PC-9 (cell line): ENCODE measurements at regions of chr17 and their contacts with region 1.

Region 1: GRCh38 chr17:62109378-62109902 is 44.4 kb upstream of the MED13 start:
- DNase-seq: peak; percentile 77 to 79
- H3K4me3 ChIP-seq: no peak overlapping the region
- H3K27ac ChIP-seq: no peak overlapping the region
- H3K4me1 ChIP-seq: peaks cover 4% of the 10 kb centered on the region; the same call in 1 of the 2 replicates
- H3K27me3 ChIP-seq: no peaks in the 10 kb centered on the region
- CTCF ChIP-seq: peak; percentile 82

Region 2: GRCh38 chr17:61635913-61636432 is 473.5 kb before region 1 on chr17:
- CTCF ChIA-PET with region 1: interaction called, 19 read pairs
- POLR2A ChIA-PET with region 1: no interaction called
- intact Hi-C with region 1: loop called (anchors 1 kb)
- DNase-seq: peak; percentile 36 to 43
- H3K4me3 ChIP-seq: no peak overlapping the region
- H3K27ac ChIP-seq: no peak overlapping the region
- H3K4me1 ChIP-seq: no peaks in the 10 kb centered on the region
- H3K27me3 ChIP-seq: no peaks in the 10 kb centered on the region
- CTCF ChIP-seq: peak; percentile 90

Region 3: DNA sequence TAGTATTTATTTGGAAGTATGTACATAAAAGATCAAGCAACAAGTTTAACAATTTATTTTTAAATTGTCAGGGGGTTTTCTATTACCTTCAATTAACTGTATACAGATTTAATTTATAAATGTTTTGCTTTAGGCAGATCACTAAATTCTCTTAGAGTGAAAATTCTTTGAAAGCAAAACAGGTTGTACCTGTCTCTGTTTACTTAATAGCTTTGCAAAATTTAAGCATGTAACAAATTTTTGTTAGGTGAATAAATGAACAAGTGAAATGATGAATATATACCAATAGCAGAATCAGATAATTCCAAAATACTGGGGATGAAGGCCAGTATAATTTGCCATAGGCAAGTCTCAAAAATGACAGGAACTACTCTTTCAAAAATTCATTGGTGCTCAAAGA is 332.8 kb before region 1 on chr17:
- CTCF ChIA-PET with region 1: no interaction called
- POLR2A ChIA-PET with region 1: no interaction called
- intact Hi-C with region 1: no loop called
- DNase-seq: no peak
- H3K4me3 ChIP-seq: no peak overlapping the region
- H3K27ac ChIP-seq: no peak overlapping the region
- H3K4me1 ChIP-seq: 0 out of 2 replicates have a peak, but pooled peaks cover 5% of the 10 kb centered on the region
- H3K27me3 ChIP-seq: no peaks in the 10 kb centered on the region
- CTCF ChIP-seq: no peak

Region 4: GRCh38 chr17:61837175-61838051 is 272.0 kb before region 1 on chr17:
- CTCF ChIA-PET with region 1: interaction called, 3 read pairs
- POLR2A ChIA-PET with region 1: no interaction called
- intact Hi-C with region 1: loop called (anchors 5 kb)
- DNase-seq: peak in 1 of 2 experiments; percentile 48
- H3K4me3 ChIP-seq: no peak overlapping the region
- H3K27ac ChIP-seq: no peak overlapping the region
- H3K4me1 ChIP-seq: peaks cover 25% of the 10 kb centered on the region
- H3K27me3 ChIP-seq: no peaks in the 10 kb centered on the region
- CTCF ChIP-seq: peak; percentile 87

Region 5: GRCh38 chr17:61862975-61863800 is 246.3 kb before region 1 on chr17 and contains the start of gene BRIP1:
- CTCF ChIA-PET with region 1: interaction called, 16 read pairs
- POLR2A ChIA-PET with region 1: no interaction called
- intact Hi-C with region 1: no loop called
- DNase-seq: peak; percentile 89 to 91
- H3K4me3 ChIP-seq: peak within 1 kb of the TSS; percentile 83
- H3K27ac ChIP-seq: peak within 1 kb of the TSS; percentile 71
- H3K4me1 ChIP-seq: peaks cover 30% of the 10 kb centered on the region
- H3K27me3 ChIP-seq: no peaks in the 10 kb centered on the region
- CTCF ChIP-seq: no peak
- total RNA-seq, gene BRIP1: 14.4 and 16.0 TPM in 2 replicates

Region 6: DNA sequence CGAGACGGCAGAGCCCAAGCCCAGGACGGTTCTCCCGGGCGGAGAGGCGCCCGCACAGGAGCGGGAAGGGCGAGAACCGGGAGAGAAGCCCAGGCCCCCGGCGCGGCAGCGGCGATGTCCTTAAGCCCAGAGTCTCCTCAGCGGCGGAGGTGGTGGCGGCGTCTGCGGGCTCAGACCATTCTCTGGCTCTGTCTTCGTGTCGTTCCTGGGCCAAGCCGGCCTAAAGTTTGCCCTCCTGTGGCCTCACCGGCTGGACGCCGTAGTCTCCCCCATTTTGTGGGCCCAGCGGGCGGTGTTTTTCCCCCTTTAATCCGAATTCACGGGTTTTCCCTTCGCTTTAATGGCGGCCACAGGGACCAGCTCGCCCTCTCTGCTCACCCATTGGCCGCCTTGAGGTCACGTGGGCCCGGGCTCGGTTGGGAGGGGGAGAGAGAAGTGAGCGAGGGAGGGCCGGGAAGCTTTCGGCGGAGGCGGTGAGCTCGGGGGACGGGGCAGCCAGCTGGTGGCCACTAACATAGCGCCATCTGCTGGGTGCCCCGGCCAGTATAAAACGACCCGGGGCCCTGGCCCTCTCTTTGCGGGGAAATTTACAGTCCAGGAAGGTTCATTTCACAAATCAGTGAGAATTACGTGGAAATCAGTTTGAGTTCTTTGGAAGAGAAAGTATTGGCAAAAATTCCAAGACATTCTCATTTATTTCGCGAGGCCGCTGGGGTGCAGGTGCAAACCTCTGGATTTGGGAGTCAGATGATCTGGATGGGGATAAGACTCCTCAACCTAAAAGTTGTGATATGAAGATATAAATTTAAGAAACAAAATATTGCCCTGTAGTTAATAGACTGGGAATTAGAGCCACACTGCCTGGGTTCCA is 43.6 kb before region 1 on chr17:
- CTCF ChIA-PET with region 1: interaction called, 19 read pairs
- POLR2A ChIA-PET with region 1: interaction called, 10 read pairs
- intact Hi-C with region 1: loop called (anchors 1 kb)
- DNase-seq: peak; percentile 91 to 96
- H3K4me3 ChIP-seq: peak overlapping the region; percentile 96
- H3K27ac ChIP-seq: peak overlapping the region; percentile 90
- H3K4me1 ChIP-seq: peaks cover 28% of the 10 kb centered on the region
- H3K27me3 ChIP-seq: no peaks in the 10 kb centered on the region
- CTCF ChIP-seq: peak; percentile 93

Region 7: GRCh38 chr17:62085511-62086408 is 23.7 kb before region 1 on chr17:
- CTCF ChIA-PET with region 1: no interaction called
- POLR2A ChIA-PET with region 1: no interaction called
- intact Hi-C with region 1: no loop called
- DNase-seq: no peak
- H3K4me3 ChIP-seq: no peak overlapping the region
- H3K27ac ChIP-seq: no peak overlapping the region
- H3K4me1 ChIP-seq: no peaks in the 10 kb centered on the region
- H3K27me3 ChIP-seq: no peaks in the 10 kb centered on the region
- CTCF ChIP-seq: no peak

Region 8: GRCh38 chr17:62179534-62180151 is 70.2 kb after region 1 on chr17:
- CTCF ChIA-PET with region 1: interaction called, 19 read pairs
- POLR2A ChIA-PET with region 1: no interaction called
- intact Hi-C with region 1: loop called (anchors 1 kb)
- DNase-seq: peak; percentile 29 to 83
- H3K4me3 ChIP-seq: no peak overlapping the region
- H3K27ac ChIP-seq: peak overlapping the region; percentile 65
- H3K4me1 ChIP-seq: peaks cover 25% of the 10 kb centered on the region
- H3K27me3 ChIP-seq: no peaks in the 10 kb centered on the region
- CTCF ChIP-seq: peak; percentile 55; the same call in 1 of the 2 replicates